Activated CD8-positive, alpha-beta memory T cell treated with anti-CD3 and anti-CD28 coated beads, Interleukin-2, amount 10 ng/mL, durations not matched to agents 7 days and 5 days (primary cell): ENCODE measurements at regions of chr2 and their contacts with region 1.

Region 1: DNA sequence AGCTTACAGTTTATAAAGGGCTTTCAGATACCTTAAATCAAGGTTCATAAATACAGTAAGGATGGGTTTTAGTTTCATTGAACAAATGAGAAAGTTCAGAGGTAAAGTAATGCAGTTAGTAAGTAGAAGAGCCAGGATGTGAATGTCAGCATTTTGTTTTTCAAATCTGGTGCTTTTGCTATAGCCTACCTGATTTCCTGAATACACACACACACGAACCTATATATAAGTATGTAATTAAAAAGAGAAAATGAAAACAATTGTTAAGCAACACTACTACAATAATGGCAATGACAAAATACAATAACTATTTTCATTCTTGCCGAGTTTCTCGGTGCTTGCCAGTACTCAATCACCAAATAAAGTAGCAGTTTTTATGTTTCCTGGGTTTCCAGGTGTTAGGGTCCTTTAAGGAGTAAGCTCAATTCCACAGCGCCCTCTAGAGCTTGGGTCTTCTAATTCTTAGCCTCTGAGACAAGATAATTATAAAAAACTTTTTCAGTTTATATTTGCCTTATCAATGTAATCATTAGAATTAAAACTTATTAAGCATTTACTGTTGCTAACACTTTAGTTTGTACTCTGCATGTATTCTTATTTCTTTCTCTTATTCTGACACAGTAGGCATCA is 512.9 kb upstream of the ACVR2A start:
- DNase-seq: peak; percentile 50
- ATAC-seq: peak; percentile 39
- H3K4me3 Mint-ChIP-seq: no peak overlapping the region
- H3K27ac Mint-ChIP-seq: no peak overlapping the region
- H3K4me1 Mint-ChIP-seq: peaks cover 7% of the 10 kb centered on the region
- H3K27me3 Mint-ChIP-seq: no peaks in the 10 kb centered on the region

Region 2: DNA sequence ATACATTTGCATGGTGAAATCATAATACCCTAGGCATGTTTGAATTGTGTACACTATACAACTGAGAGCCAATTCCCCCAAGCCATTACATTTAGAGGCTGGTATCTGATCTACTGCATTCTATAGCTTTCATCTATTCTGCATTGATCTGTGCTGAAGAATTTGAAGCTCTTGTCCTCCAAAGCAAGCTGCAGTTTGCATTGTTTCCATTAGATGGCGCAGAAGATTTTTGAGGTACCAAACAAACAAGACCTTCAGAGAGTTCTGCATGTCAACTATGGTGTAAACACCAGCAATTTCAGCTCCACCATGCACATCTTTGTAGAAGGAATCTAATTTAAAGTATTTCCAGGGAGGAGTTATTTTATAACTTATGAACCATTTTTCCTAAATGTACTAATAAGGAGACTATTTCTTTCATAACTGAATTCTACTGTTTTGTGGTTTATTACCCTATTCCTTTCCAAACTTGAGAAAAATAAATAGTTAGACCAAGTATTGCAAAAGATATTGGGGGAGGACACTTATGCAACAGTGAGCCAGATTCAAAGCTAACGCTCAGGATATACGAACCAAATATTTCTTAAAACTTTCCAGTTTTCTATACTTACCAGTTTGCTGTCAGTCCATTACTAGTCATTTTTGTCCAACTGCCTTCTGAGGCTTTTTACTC is 248.9 kb before region 1 on chr2:
- CTCF ChIA-PET with region 1: interaction called, 10 read pairs
- DNase-seq: peak; percentile 47
- ATAC-seq: peak; percentile 42
- H3K4me3 Mint-ChIP-seq: no peak overlapping the region
- H3K27ac Mint-ChIP-seq: no peak overlapping the region
- H3K4me1 Mint-ChIP-seq: peaks cover 1% of the 10 kb centered on the region
- H3K27me3 Mint-ChIP-seq: no peaks in the 10 kb centered on the region